Activated naive CD4-positive, alpha-beta T cell treated with anti-CD3 and anti-CD28 coated beads for 36 hours (primary cell): ENCODE measurements at regions of chr5 and their contacts with region 1.

Region 1: DNA sequence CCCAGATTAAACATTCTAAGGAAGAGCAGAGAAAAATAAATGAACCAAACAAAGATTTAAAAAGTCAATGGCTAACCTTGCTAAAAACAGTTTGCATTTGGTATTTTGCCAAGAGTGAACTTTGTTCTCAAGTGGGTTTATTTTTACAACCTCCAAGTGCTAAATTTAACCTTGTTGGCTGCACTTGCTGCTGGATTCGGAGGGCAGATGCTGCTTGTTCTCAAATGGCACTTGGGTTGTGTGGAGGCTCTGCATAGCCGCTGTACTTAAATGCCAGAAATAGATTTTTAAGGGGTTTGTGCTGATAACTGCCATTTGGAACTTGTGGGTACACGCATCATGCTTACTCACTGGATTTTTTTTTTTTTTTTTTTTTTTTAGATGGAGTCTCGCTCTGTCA is 13.3 kb upstream of the SPATA24 start:
- DNase-seq: no peak
- H3K4me3 Mint-ChIP-seq: no peak overlapping the region
- H3K27ac Mint-ChIP-seq: no peak overlapping the region
- H3K4me1 Mint-ChIP-seq: peaks cover 50% of the 10 kb centered on the region
- H3K27me3 Mint-ChIP-seq: no peaks in the 10 kb centered on the region

Region 2: DNA sequence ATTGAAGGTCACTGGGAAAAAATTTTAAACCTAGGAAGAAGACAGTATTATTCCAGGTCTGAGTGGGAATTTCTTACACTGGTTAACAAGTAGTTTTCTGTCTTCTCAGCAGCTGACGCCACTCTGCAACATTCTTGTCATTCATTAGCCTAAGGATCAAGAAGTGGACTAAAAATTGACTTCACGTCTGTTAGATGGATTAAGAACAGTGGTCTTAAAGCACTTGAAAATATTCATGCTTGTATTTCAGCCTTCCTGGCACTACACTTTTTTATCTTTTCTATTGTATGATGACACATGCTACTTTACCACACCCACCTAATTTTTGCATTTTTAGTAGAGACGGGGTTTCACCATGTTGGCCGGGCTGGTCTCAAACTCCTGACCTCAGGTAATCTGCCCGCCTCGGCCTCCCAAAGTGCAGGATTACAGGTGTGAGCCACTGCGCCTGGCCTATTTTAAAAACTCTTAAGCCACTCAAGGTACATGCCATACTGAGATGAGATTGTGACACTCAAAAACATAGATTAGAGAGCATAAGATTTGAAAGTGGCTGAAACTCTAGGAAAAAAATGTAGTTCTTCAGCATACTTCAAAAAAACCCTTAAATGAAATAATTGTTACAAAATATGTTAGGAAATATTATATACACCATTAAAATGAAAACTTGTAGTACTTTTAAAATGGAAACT is 115.3 kb before region 1 on chr5:
- CTCF ChIA-PET with region 1: no interaction called
- intact Hi-C with region 1: loop called (anchors 1 kb)
- DNase-seq: no peak
- H3K4me3 Mint-ChIP-seq: no peak overlapping the region
- H3K27ac Mint-ChIP-seq: peak overlapping the region; percentile 76
- H3K4me1 Mint-ChIP-seq: peaks cover 89% of the 10 kb centered on the region
- H3K27me3 Mint-ChIP-seq: no peaks in the 10 kb centered on the region

Region 3: DNA sequence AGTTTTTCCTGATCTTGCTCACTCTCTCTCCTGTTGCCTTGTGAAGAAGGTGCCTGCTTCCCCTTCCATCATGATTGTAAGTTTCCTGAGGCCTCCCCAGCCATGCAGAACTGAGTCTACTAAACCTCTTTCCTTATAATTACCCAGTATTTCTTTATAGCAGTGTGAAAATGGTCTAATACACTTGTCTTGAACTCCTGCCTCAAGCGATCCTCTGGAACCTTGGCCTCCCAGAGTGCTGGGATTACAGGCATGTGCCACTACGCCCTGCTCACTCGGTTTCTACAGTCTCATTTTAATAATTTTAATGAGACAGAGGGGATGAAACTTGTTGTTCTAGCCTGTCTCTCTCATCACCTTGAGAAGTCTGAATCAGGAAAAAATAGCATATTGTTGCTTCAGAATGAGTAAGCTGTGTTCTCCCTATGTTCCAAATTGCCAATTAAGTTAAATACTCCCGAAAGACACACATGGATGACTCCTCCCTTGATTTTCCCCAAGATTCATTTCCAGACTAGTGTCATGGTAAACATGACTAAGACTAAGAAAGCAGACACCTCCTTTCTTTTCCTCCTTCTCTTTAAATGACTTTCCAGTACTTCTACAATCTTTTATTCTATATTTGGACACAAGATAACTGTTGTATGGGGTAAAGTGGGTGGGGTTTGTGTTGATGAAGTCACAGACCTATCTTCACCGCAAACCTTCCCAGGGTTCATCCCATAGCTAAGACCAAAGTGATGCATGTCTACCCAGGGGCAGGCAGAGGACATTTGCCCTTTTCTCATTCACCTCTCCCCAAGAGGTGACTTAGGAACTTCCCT is 30.0 kb after region 1 on chr5:
- CTCF ChIA-PET with region 1: interaction called, 11 read pairs
- intact Hi-C with region 1: loop called (anchors 1 kb)
- DNase-seq: peak; percentile 68
- H3K4me3 Mint-ChIP-seq: no peak overlapping the region
- H3K27ac Mint-ChIP-seq: peak overlapping the region; percentile 97
- H3K4me1 Mint-ChIP-seq: peaks cover 63% of the 10 kb centered on the region
- H3K27me3 Mint-ChIP-seq: no peaks in the 10 kb centered on the region

Region 4: GRCh38 chr5:139474890-139475791 is 57.9 kb after region 1 on chr5:
- CTCF ChIA-PET with region 1: interaction called, 20 read pairs
- intact Hi-C with region 1: loop called (anchors 2 kb)
- DNase-seq: peak; percentile 41
- H3K4me3 Mint-ChIP-seq: peak overlapping the region; percentile 35
- H3K27ac Mint-ChIP-seq: peak overlapping the region; percentile 84
- H3K4me1 Mint-ChIP-seq: peaks cover 83% of the 10 kb centered on the region
- H3K27me3 Mint-ChIP-seq: no peaks in the 10 kb centered on the region

Region 5: GRCh38 chr5:139745800-139746690 is 328.8 kb after region 1 on chr5:
- CTCF ChIA-PET with region 1: no interaction called
- intact Hi-C with region 1: loop called (anchors 5 kb)
- DNase-seq: peak; percentile 50
- H3K4me3 Mint-ChIP-seq: peak overlapping the region; percentile 72
- H3K27ac Mint-ChIP-seq: no peak overlapping the region
- H3K4me1 Mint-ChIP-seq: peaks cover 21% of the 10 kb centered on the region
- H3K27me3 Mint-ChIP-seq: peaks cover 15% of the 10 kb centered on the region